Activated CD4-positive, alpha-beta T cell treated with anti-CD3 and anti-CD28 coated beads, Interleukin-2, amount 10 ng/mL, durations not matched to agents 24 days and 14 days (primary cell): ENCODE measurements at regions of chr13 and their contacts with region 1.

Region 1: GRCh38 chr13:73765651-73766384 is 368.4 kb downstream of the KLF12 start:
- DNase-seq: peak; percentile 88
- H3K4me3 Mint-ChIP-seq: peak overlapping the region; percentile 78
- H3K27ac Mint-ChIP-seq: peak overlapping the region; percentile 88
- H3K4me1 Mint-ChIP-seq: peaks cover 44% of the 10 kb centered on the region
- H3K27me3 Mint-ChIP-seq: no peaks in the 10 kb centered on the region

Region 2: DNA sequence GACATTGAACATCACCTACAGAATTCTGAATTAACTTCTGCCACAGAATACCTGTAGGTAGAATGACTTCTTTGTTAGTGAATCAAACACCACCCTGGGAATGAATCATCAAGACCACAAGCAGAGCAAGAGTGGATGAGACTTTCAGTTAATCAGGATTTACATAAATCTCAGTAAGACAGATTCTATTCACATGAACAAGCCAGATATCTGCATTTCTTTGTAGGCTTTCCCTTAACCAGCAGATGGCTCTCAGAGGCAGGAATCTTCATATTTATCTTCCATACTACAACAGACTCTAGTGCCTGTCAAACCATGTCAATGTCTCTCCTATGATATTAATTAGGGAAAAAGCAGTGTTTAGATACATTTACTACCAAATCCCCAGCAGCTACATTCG is 43.7 kb before region 1 on chr13:
- intact Hi-C with region 1: loop called (anchors 2 kb)
- DNase-seq: no peak
- H3K4me3 Mint-ChIP-seq: no peak overlapping the region
- H3K27ac Mint-ChIP-seq: no peak overlapping the region
- H3K4me1 Mint-ChIP-seq: peaks cover 17% of the 10 kb centered on the region
- H3K27me3 Mint-ChIP-seq: no peaks in the 10 kb centered on the region

Region 3: DNA sequence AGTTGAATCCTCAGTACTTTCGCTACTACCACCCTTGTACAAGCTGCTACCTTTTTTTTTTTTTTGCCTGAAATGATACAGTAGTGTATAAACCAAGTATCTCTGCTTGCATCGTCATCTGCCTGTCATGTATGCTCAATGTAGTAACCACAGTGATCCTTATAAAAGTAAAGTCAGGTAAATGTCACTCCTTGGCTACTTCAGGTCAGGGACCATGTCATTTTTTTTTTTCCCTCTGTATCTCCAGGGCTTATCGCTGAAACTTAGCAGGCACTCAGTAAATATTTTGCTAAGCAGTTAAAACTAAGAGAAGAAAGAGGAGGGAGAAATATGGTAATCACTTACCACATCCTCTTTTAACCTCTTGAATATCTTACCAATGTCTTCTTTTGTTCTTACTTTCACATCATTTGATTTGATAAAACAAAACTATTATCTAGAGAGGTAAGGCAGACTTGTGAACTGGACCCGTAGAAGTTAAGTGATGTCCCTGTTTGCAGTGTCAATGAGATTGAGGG is 465.2 kb after region 1 on chr13:
- intact Hi-C with region 1: loop called (anchors 5 kb)
- DNase-seq: peak; percentile 61
- H3K4me3 Mint-ChIP-seq: peak overlapping the region; percentile 51
- H3K27ac Mint-ChIP-seq: peak overlapping the region; percentile 56
- H3K4me1 Mint-ChIP-seq: peaks cover 15% of the 10 kb centered on the region
- H3K27me3 Mint-ChIP-seq: no peaks in the 10 kb centered on the region